GM10248 (cell line): ENCODE measurements at regions of chr4 and their contacts with region 1.

Region 1: GRCh38 chr4:42690537-42690936 is 33.6 kb upstream of the ATP8A1 start:
- DNase-seq: no peak
- CTCF ChIP-seq: no peak

Region 2: GRCh38 chr4:42656944-42657792 is 33.4 kb before region 1 on chr4 and contains the start of gene ATP8A1:
- CTCF ChIA-PET with region 1: interaction called, 10 read pairs
- POLR2A ChIA-PET with region 1: no interaction called
- DNase-seq: peak; percentile 96
- CTCF ChIP-seq: no peak